Colonic mucosa (tissue), 4 donors: ENCODE measurements at regions of chr10 and their contacts with region 1.

Region 1: DNA sequence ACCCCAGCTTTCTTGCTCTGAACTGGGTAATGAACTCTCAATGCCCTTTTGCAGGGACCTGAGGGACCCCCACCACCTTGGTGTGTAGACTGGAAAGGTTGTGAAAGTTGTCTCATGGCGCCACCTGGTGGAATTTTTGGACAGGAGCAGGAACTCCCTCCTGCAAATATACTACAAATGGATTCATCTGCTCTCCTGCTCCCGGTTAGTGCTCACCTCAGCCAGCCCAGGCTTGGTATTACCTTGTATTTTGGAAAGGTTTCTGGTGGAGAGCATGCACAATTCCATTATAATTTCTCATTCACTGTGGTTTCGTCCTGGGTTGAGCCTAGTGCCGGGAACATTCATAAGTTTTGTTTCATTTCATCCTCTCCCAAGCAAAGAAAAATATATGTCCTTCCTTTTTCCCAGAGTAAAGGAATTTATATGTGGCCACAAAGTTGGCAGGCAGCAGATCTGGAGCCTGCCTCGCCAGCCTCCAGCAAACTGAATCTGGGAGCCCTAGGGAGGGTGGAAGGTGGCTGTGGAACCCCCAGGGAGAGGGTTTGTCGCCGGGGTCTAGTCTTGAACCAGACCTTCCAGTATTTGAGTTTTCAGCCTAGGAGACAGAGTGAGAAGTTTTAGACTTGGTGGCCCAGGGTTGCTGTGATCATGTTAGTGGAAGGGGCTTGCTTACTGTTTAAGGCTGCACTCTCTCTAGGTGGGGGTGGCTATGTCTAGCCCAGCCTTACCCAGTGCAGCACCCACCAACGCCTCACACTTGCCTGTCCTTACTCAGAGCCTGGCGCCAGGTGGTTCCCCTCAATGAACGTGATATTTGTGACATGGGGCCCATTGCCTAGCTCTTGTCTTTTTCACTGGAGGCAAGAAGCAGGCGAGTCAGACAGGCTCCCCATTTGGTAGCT is 9.5 kb downstream of the FAM241B start:
- DNase-seq: peak; percentile 65
- H3K4me3 ChIP-seq: no peak overlapping the region
- H3K27ac ChIP-seq: no peak overlapping the region
- H3K4me1 ChIP-seq: no peaks in the 10 kb centered on the region
- H3K27me3 ChIP-seq: no peaks in the 10 kb centered on the region
- CTCF ChIP-seq: peak; percentile 86

Region 2: DNA sequence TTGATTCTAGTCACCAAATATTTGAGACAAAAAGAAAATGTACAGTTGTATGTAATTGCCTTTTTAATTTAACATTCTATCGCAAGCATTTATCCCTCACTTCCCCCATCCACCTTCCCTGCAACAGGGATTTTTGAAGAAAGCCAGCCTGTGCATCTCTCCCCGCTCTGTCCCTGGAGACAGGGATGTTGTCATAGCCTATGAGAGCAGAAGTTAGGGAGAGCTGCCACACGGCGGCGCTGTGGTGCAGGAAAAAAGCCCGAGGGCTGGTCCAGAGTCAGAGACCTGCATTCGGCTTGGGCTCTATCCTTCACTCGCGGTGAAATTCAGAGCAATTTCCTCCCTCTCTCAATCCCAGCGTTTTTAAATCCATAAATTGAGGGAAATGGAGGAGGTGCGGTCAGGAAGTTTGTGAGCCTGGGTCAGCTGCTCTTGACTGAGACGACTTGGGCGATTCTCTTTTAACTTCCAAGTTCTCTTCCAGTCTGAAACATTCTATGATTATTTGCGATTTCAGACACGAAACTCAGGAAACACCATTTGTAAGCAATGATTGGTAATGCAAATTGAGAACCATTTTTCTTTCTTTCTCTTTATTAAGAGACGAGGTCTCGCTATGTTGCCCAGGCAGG is 401.9 kb before region 1 on chr10:
- intact Hi-C with region 1: loop called (anchors 10 kb)
- DNase-seq: peak; percentile 90
- H3K4me3 ChIP-seq: no peak overlapping the region
- H3K27ac ChIP-seq: no peak overlapping the region
- H3K4me1 ChIP-seq: no peaks in the 10 kb centered on the region
- H3K27me3 ChIP-seq: no peaks in the 10 kb centered on the region
- CTCF ChIP-seq: peak; percentile 93

Region 3: DNA sequence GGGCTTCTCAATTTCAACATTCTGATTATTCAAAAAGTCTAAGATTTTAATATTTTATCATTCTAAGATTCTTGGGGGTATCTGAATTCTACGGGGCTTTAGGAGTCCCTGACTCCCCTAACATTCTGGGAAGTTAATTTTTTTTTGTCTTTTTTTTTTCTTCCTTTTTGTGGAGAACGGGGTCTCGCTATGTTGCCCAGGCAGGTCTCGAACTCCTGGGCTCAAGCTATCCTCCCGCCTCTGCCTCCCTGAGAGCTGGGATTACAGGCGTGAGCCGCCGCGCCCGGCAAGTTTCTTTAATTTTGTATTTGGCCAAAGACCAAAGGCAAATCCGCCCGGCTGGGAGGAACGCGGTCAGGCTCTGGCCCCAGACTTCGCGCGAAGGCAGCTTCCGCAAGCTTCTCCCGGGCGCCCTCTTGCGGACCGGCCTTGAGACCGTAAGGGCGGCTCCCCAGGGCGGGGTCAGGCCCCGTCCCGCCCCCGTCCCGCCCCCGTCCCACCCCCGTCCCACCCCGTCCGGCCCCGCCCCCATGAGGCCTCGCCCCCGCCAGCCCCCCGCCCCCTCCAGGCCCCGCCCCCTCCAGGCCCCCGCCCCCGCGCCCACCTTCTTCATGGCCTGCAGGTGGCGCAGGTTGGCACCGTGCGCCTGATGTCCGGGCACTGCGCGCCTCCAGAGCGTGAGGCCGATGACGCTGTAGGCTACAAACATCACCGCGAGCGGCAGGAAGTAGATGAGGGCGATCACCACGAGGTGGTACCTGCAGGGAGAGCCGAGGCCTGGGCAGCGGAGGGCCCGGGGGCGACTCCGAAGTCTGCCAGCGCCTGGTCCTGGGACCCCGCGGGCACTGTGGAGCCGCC is 231.0 kb before region 1 on chr10:
- intact Hi-C with region 1: loop called (anchors 5 kb)
- DNase-seq: peak; percentile 97
- H3K4me3 ChIP-seq: peak overlapping the region; percentile 13
- H3K27ac ChIP-seq: peak overlapping the region; percentile 90
- H3K4me1 ChIP-seq: no peaks in the 10 kb centered on the region
- H3K27me3 ChIP-seq: no peaks in the 10 kb centered on the region
- CTCF ChIP-seq: peak; percentile 74

Region 4: GRCh38 chr10:69515699-69516259 is 123.8 kb before region 1 on chr10:
- intact Hi-C with region 1: loop called (anchors 2 kb)
- DNase-seq: peak; percentile 78
- H3K4me3 ChIP-seq: no peak overlapping the region
- H3K27ac ChIP-seq: no peak overlapping the region
- H3K4me1 ChIP-seq: no peaks in the 10 kb centered on the region
- H3K27me3 ChIP-seq: no peaks in the 10 kb centered on the region
- CTCF ChIP-seq: peak; percentile 83

Region 5: DNA sequence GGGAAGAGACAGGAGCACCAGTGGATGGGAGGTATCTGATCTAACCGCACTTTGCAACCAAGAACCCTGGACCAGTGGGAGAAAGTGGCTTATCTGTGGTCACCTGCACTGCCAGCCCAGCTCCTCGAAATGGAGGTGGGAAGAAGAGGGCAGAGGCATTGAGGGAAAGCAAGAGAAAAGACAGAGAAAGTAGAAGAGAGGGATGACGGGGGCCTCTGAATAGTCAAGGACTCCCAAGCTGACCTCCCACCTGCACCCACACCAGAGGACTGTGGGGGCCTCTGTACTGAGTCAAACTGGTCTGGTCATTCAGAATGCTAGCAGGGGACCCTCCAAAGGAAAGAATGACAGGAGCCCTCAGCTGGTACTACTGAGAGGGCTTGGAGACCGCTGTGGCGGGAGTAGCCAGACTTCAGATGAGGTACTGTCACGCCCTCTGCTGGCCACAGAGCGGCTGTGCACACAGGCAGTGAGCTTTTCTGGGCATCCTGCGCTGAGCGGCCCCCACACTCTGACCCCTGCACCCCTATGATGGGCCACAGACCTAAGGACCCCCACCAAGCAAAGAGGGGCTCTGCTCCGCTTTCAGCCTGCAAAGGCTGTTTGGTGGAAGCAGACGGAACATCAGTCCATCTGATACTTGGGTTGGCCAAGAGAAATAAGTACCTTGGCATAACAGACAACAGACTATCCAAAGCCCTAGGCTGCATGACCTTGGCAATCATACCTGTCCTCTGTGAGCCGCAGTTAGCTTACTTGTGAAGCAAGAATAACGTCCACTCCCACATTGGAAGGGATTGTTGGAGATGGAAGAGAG is 275.1 kb after region 1 on chr10:
- intact Hi-C with region 1: loop called (anchors 10 kb)
- DNase-seq: peak; percentile 77
- H3K4me3 ChIP-seq: no peak overlapping the region
- H3K27ac ChIP-seq: no peak overlapping the region
- H3K4me1 ChIP-seq: peaks cover 14% of the 10 kb centered on the region
- H3K27me3 ChIP-seq: no peaks in the 10 kb centered on the region
- CTCF ChIP-seq: peak; percentile 93